Activated B cell treated with CpG ODN at 0.5 μM for 24 hours (primary cell): ENCODE measurements at regions of chr10 and their contacts with region 1.

Region 1: GRCh38 chr10:100373298-100374136 is 26.5 kb downstream of the SCD start:
- DNase-seq: peak; percentile 61
- ATAC-seq: peak; percentile 98
- H3K4me3 Mint-ChIP-seq: no peak overlapping the region
- H3K27ac Mint-ChIP-seq: no peak overlapping the region
- H3K4me1 Mint-ChIP-seq: peaks cover 33% of the 10 kb centered on the region
- H3K27me3 Mint-ChIP-seq: no peaks in the 10 kb centered on the region
- CTCF ChIP-seq: no peak

Region 2: DNA sequence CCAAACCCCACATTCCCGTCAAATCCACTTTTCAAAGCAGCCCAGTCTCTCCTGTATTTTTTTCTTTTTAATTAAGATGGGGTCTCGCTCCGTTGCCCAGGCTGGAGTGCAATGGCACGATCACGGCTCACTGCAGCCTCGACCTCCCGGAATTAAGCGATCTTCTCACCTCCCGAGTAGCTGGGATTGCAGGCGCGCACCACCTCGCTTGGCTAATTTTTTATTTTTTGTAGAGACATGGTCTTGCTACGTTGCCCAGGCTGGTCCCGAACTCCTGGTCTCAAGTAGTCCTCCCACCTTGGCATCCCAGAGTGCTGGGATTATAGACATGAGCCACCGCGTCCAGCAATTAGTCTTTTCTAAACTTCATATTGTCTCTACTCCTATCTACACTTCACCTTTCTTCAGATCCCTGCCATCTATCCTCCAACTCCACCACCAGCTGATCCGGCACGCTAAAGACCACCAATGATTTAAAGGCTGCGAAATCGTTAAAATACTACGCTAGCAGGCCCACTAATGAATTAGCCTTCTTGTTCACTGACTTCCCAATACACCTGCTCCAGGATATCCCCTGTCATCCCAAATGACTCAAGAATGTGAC is 143.6 kb before region 1 on chr10:
- CTCF ChIA-PET with region 1: no interaction called
- POLR2A ChIA-PET with region 1: no interaction called
- intact Hi-C with region 1: loop called (anchors 1 kb)
- DNase-seq: no peak
- ATAC-seq: no peak
- H3K4me3 Mint-ChIP-seq: peak overlapping the region; percentile 90
- H3K27ac Mint-ChIP-seq: peak overlapping the region; percentile 87
- H3K4me1 Mint-ChIP-seq: peaks cover 29% of the 10 kb centered on the region
- H3K27me3 Mint-ChIP-seq: no peaks in the 10 kb centered on the region
- CTCF ChIP-seq: no peak

Region 3: GRCh38 chr10:100338434-100339036 is 35.0 kb before region 1 on chr10:
- CTCF ChIA-PET with region 1: interaction called, 4 read pairs
- POLR2A ChIA-PET with region 1: interaction called, 4 read pairs
- intact Hi-C with region 1: loop called (anchors 2 kb)
- DNase-seq: peak; percentile 64
- ATAC-seq: peak; percentile 87
- H3K4me3 Mint-ChIP-seq: peak overlapping the region; percentile 24
- H3K27ac Mint-ChIP-seq: peak overlapping the region; percentile 19
- H3K4me1 Mint-ChIP-seq: peaks cover 25% of the 10 kb centered on the region
- H3K27me3 Mint-ChIP-seq: peaks cover 3% of the 10 kb centered on the region
- CTCF ChIP-seq: no peak

Region 4: GRCh38 chr10:100346765-100347567 is 26.6 kb before region 1 on chr10 and contains the start of gene SCD:
- CTCF ChIA-PET with region 1: interaction called, 3 read pairs
- POLR2A ChIA-PET with region 1: interaction called, 21 read pairs
- intact Hi-C with region 1: loop called (anchors 1 kb)
- DNase-seq: peak; percentile 69
- ATAC-seq: peak; percentile 95
- H3K4me3 Mint-ChIP-seq: peak within 1 kb of the TSS; percentile 89
- H3K27ac Mint-ChIP-seq: peak within 1 kb of the TSS; percentile 61
- H3K4me1 Mint-ChIP-seq: peaks cover 22% of the 10 kb centered on the region
- H3K27me3 Mint-ChIP-seq: peaks cover 3% of the 10 kb centered on the region
- CTCF ChIP-seq: no peak
- total RNA-seq, gene SCD: 24.9 and 26.0 TPM in 2 replicates

Region 5: GRCh38 chr10:100362570-100363496 is 10.7 kb before region 1 on chr10:
- CTCF ChIA-PET with region 1: no interaction called
- POLR2A ChIA-PET with region 1: no interaction called
- intact Hi-C with region 1: no loop called
- DNase-seq: no peak
- ATAC-seq: no peak
- H3K4me3 Mint-ChIP-seq: no peak overlapping the region
- H3K27ac Mint-ChIP-seq: no peak overlapping the region
- H3K4me1 Mint-ChIP-seq: peaks cover 5% of the 10 kb centered on the region
- H3K27me3 Mint-ChIP-seq: peaks cover 8% of the 10 kb centered on the region
- CTCF ChIP-seq: no peak

Region 6: DNA sequence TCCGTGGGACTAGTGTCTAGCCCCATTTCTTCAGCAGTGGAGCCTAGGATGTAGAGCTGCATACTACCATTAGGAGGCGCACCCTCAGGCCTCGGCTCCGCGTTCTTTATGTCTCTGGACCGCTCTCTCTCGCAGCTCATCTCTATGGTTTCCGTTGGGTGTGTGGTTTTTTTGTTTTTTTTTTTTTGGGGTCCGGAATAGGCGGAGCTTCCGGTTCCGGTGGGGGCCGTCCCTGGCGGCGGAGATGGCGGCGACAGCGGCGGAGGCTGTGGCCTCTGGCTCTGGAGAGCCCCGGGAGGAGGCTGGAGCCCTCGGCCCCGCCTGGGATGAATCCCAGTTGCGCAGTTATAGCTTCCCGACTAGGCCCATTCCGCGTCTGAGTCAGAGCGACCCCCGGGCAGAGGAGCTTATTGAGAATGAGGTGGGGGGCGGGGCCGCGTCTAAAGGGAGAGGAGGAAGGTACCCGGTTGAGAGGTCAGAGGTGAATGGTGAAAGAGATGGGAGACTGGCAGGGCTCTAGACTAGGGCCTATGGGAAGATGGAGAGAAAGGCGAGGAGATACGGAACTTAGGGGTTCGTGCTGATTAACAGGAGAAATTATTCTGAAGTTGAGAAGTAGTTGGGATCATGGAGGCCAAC is 162.3 kb after region 1 on chr10 and contains the start of gene HIF1AN:
- CTCF ChIA-PET with region 1: no interaction called
- POLR2A ChIA-PET with region 1: interaction called, 14 read pairs
- intact Hi-C with region 1: no loop called
- DNase-seq: peak; percentile 79
- ATAC-seq: peak; percentile 100
- H3K4me3 Mint-ChIP-seq: no peak within 1 kb of the TSS
- H3K27ac Mint-ChIP-seq: no peak within 1 kb of the TSS
- H3K4me1 Mint-ChIP-seq: peaks cover 14% of the 10 kb centered on the region
- H3K27me3 Mint-ChIP-seq: no peaks in the 10 kb centered on the region
- CTCF ChIP-seq: peak; percentile 3
- total RNA-seq, gene HIF1AN: 55.8 and 59.9 TPM in 2 replicates